ENCODE measurements at regions of chr11 and their contacts with region 1.

Region 1: DNA sequence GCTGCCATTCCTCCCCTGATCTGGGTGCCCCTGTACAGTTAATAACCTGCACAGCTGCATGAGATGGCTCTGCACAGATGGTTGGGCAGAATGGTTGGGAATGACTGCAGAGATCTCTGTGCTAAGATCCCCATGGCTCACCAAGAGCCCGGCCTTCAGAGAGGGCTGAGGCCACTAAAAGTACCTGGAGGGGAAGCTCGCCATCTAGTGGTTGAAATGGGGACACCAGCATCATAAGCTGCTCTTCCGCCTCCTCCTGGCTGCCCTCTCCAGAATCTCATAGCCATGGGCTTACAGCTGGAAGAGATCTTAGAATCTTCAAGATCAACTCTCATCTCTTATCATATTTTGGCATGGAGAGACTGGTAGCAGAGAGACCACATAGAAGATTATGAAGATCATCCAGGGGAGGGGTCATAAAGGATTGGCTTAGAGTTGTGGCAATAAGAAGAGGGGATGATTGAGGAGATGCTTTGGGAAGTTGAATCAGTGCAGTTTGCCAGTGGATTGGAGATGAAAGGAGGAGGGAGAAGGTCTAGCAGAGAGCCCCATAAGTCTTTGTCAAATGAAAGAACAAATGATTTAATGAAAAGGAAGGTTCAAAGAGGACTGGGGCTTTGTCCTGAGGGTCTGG is 22.0 kb upstream of the TLCD5 start:
- DNase-seq: peak in 4 of 5 donors; percentile 34 to 72 (median 54)
- H3K4me3 ChIP-seq: no peak overlapping the region
- H3K27ac ChIP-seq: no peak overlapping the region
- H3K4me1 ChIP-seq: no peaks in the 10 kb centered on the region
- H3K27me3 ChIP-seq: no peaks in the 10 kb centered on the region
- CTCF ChIP-seq: peak; percentile 18 to 57 (median 44)
- EP300 ChIP-seq: no peak
- POLR2A ChIP-seq: no peak

Region 2: DNA sequence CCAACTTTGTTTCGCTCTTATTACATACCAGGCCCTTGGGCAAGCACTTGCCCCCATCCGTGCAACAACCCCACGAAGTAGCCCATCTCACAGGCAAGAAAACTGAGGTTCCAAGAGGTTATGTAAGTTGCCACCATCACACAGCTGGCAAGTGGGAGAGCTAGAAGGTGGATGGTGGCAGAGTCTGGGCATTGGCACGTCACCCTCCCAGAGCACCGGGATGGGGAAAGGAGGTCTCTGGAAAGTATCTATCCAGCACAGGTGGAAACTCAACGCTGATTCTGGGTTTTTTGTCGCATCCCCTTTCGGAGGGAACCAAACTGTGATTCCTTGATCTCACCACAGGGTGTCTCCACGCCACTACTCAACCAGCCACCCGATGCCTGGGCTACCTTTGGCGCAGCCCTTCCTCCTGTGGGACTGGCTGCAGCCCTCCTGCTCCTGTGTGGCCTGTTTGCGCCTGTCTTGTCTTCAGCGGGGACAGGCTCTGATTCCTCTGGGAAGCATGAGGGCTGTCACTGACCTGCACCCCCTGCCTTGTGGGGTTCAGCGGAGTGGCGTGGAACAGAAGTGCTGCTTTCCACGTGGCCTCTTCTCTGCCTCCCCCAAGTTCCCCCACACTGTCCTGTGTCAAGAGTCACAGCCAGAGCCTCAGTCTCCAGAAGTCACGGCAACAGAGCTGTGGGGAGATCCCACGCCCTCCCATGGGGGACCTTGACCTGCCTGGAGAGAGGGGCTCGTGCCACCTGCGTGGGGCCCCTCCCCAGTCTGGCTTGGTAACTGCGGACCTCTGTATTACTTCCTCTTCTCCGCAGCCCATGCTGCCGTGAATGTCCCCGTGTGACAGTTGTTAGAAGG is 130.8 kb before region 1 on chr11:
- intact Hi-C with region 1: loop called in 3 of 4 experiments (anchors 2 to 5 kb)
- DNase-seq: peak; percentile 71 to 82 (median 79)
- H3K4me3 ChIP-seq: no peak overlapping the region
- H3K27ac ChIP-seq: no peak overlapping the region
- H3K4me1 ChIP-seq: no peaks in the 10 kb centered on the region
- H3K27me3 ChIP-seq: no peaks in the 10 kb centered on the region
- CTCF ChIP-seq: peak; percentile 82 to 91 (median 86)
- EP300 ChIP-seq: no peak
- POLR2A ChIP-seq: no peak

Region 3: DNA sequence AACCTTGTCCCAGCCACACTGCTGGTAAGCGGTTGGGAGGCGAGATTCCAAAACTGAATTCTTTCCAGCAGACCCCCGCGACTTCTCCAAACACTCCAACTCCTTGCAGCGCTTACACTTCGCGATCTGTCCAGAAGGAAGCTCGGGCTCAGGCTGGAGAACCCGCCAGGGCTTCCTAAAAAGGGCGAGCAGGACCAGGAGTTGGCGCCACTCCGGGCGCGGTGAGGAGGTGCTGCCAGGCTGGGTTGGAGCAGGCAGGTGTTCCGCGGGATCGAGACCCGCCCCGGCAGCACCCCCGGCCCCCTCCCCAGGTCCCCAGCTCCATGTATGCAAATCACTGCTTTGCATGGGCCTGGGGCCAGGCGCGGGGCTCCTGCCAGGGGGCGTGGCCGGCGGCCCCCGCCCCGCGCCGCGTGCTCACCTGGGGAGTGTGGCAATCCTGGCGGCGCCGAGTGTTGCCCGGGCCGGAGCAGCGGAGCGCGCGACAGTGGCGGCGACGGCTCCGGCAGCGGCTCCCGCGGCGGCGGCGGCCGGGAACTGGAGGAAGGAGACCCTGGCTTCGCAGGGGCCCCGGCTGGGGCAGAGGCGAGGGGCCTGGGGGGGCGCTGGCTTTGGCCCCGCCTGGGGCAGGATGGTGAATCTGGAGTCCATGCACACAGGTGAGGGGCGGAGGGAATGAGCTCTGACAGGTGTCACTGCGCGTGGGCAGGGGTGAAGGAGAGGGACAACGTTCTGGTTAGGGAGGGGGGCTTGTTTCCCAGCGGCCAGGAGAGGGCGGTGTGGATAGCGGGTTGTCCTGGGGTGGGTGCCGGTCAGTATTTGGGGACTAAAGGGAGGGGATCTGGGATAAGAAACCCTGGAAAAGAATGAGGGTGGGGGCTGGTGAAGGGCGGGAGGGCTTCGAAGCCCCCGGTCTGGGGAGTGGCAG is 63.1 kb before region 1 on chr11 and contains the start of gene POU2F3:
- intact Hi-C with region 1: loop called in 3 of 4 experiments (anchors 2 to 10 kb)
- DNase-seq: no peak
- H3K4me3 ChIP-seq: no peak within 1 kb of the TSS
- H3K27ac ChIP-seq: no peak within 1 kb of the TSS
- H3K4me1 ChIP-seq: peaks cover 4% of the 10 kb centered on the region
- H3K27me3 ChIP-seq: no peaks in the 10 kb centered on the region
- CTCF ChIP-seq: no peak
- EP300 ChIP-seq: no peak
- POLR2A ChIP-seq: no peak
- total RNA-seq, gene POU2F3: 0.20 to 1.0 (median 0.23) TPM in 5 of 7 donors, not detected in the others